Panc1 (cell line): ENCODE measurements at regions of chr20 and their contacts with region 1.

Region 1: DNA sequence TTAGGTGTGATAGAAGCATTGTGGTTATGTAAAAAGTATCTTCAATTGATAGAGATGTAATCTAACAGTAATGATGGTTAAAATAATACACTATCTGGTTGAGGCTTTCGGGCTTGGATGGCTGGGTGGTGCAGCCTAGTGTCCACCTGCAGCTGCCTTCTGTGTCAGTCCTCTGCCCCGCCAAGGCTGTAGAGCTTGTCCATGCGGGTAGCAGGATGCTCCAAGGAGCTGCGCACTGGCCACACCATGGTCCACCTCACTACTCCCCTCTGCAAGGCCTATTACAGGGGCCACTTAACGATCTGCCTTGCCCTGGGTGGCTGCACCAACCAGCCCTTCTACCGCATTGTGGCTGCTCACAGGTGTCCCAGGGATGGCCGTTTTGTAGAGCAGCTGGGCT is 50.6 kb upstream of the ZNF831 start:
- DNase-seq: no peak
- ATAC-seq: no peak
- H3K4me3 ChIP-seq: no peak overlapping the region
- H3K27ac ChIP-seq: no peak overlapping the region
- H3K4me1 ChIP-seq: no peaks in the 10 kb centered on the region
- H3K27me3 ChIP-seq: no peaks in the 10 kb centered on the region
- CTCF ChIP-seq: no peak

Region 2: GRCh38 chr20:60984666-60985065 is 1871.7 kb after region 1 on chr20:
- CTCF ChIA-PET with region 1: interaction called, 11 read pairs
- POLR2A ChIA-PET with region 1: no interaction called
- in situ Hi-C with region 1: no loop called
- intact Hi-C with region 1: no loop called
- DNase-seq: no peak
- ATAC-seq: no peak
- H3K4me3 ChIP-seq: no peak overlapping the region
- H3K27ac ChIP-seq: no peak overlapping the region
- H3K4me1 ChIP-seq: no peaks in the 10 kb centered on the region
- H3K27me3 ChIP-seq: no peaks in the 10 kb centered on the region
- CTCF ChIP-seq: no peak